ENCODE measurements at regions of chr12 and their contacts with region 1.

Region 1: DNA sequence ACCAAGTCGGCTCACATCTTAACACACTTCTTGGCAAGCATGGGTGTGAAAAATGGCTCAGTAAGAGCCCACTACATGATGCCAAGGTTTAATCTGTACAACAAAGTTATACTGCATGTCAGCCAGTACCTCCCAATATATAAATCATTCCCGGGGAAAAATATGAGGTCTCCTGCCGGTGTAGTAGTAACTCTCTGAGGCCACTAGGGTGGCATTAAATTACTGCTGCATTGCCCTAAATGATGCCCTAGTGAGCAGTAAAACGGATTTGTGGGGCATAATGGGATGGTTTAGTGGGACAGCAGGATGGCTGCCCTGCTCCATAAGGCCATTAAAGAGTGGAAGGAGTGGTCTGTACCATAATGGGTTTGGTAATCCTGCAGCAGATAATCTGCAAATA is 267.7 kb downstream of the MED13L start:
- DNase-seq: no peak
- ATAC-seq: no peak; the same call in 2 of the 3 replicates
- H3K4me3 ChIP-seq: no peak overlapping the region
- H3K27ac ChIP-seq: no peak overlapping the region
- H3K4me1 ChIP-seq: no peaks in the 10 kb centered on the region
- H3K27me3 ChIP-seq: no peaks in the 10 kb centered on the region
- CTCF ChIP-seq: peak in 1 of 3 experiments; percentile 31; a peak in 1 of 6 replicates
- EP300 ChIP-seq: no peak
- POLR2A ChIP-seq: no peak
- RAD21 ChIP-seq: no peak

Region 2: DNA sequence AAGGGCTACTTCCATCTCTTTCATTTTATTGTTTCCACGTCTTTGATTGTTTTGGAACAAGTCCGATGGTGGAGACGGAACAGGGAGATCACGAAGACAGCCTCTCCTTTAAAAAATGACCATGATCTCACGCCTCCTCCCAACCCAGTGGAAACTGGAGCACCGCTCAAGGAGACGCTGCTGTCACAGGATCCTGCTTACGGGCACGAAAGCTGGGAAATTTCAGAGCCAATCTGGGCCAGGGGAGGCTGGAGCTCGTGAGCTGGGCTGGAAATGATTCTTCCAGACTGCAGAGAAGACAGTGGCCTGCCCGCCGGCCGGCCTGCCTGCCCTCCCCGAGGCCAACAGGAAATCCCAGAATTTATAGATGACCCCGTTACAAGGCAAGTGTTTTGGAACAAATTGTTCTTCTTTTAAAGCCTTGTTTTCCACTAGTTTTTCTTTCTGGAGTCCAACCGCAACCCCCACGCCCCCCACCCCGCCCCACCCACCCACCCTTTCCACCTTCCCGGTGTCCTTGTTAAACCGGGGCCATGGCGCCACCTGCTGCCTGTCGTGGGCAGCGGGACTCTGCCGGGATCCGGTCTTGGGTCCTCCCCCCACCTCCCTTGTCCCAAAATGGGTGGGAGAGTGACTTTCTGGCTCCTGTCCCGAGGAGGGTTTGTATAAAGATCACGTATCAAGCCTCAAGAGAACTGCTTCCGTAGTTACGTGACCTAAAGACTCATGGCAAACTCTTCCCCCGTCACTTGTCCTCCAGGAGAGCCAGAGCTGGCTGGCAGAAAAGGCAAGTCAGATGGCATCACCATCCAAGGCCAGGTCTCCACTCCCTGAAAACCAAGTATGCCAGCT is 589.7 kb after region 1 on chr12:
- CTCF ChIA-PET with region 1: no interaction called
- POLR2A ChIA-PET with region 1: no interaction called
- RAD21 ChIA-PET with region 1: no interaction called
- SMC1A ChIA-PET with region 1: no interaction called
- in situ Hi-C with region 1: loop called (anchors 10 kb)
- intact Hi-C with region 1: no loop called
- DNase-seq: peak; percentile 7
- ATAC-seq: peak; percentile 63
- H3K4me3 ChIP-seq: no peak overlapping the region
- H3K27ac ChIP-seq: no peak overlapping the region
- H3K4me1 ChIP-seq: peaks cover 3% of the 10 kb centered on the region; the same call in 1 of the 2 replicates
- H3K27me3 ChIP-seq: no peaks in the 10 kb centered on the region
- CTCF ChIP-seq: peak; percentile 41 to 57 (median 42)
- EP300 ChIP-seq: no peak
- POLR2A ChIP-seq: no peak
- RAD21 ChIP-seq: peak; percentile 75